K562 (cell line): ENCODE measurements at regions of chr11 and their contacts with region 1.

Region 1: DNA sequence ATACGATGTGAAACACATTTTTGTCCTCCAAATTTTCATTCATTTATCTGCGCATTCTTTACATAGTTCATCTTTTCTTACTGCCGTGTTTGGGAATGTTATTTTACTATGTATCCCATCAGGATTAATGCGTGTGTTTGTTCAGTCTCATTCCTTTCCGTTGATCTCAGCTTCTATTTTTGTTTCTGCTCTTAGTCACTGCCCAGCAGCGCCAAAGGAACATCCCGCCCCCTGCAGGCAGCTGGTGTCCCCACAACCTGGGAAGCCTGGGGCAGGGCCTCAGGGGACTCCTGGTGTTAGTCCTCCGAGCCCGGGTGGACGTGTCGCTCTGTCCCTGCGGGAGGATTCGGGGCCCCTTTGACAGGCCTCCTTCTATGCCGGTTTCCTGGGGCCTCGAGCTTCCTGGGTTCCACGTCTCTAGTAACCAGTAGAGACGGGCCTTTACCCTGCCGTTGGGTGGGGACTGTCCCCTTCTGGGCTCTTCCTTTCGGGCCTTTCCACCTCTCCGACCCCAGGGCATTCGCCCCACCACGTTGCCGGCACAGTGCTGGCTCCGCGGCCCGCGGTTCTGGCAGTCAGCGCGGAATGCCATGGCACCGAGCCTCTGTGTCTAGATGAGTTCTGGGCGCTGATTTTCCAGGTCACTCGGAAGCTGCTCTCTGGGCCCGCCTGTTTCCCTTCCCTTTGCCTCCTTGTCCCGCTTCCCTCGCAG is 39.8 kb downstream of the WEE1 start:
- DNase-seq: peak; percentile 88 to 97 (median 92)
- ATAC-seq: peak; percentile 90
- H3K4me3 ChIP-seq: peak overlapping the region; percentile 46
- H3K27ac ChIP-seq: peak overlapping the region; percentile 95
- H3K4me1 ChIP-seq: peaks cover 19 to 21% of the 10 kb centered on the region in 2 experiments; a peak in 4 of 5 replicates
- H3K27me3 ChIP-seq: no peaks in the 10 kb centered on the region
- CTCF ChIP-seq: peak; percentile 94 to 98 (median 97)
- EP300 ChIP-seq: peak; percentile 64
- POLR2A ChIP-seq: peak; percentile 65
- RAD21 ChIP-seq: peak; percentile 93

Region 2: DNA sequence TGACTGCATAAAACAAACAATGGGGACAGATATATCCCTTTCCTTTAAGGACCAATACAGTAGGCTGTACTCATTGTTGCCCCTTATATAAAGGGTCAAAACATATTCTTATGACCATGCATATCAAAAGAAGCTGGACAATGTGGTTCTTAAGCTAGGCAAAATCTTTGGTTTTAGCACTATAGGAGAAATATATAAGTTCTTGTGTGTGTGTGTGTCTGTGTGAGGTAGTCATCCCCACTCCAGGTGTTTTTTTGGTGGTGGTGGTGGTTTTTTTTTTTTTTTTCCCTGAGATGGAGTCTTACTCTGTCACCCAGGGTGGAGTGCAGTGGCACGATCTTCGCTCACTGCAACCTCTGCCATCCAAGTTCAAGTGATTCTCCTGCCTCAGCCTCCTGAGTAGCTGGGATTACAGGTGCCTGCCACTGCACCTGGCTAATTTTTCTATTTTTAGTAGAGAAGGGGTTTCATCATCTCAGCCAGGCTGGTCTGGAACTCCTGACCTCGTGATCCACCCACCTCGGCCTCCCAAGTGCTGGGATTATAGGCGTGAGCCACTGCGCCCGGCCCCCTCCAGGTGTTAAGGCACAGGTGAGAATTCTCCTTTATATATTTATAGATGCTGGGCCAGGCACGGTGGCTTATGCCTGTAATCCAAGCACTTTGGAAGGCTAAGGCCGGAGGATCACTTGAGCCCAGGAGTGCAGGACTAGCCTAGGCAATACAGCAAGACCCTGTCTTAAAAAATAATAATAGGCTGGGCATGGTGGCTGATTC is 164.5 kb before region 1 on chr11:
- CTCF ChIA-PET with region 1: no interaction called
- POLR2A ChIA-PET with region 1: no interaction called
- in situ Hi-C with region 1: no loop called
- intact Hi-C with region 1: loop called (anchors 5 kb)
- DNase-seq: no peak
- ATAC-seq: peak; percentile 32
- H3K4me3 ChIP-seq: no peak overlapping the region
- H3K27ac ChIP-seq: no peak overlapping the region
- H3K4me1 ChIP-seq: no peaks in the 10 kb centered on the region
- H3K27me3 ChIP-seq: no peaks in the 10 kb centered on the region
- CTCF ChIP-seq: no peak
- EP300 ChIP-seq: no peak
- POLR2A ChIP-seq: peak; percentile 64
- RAD21 ChIP-seq: no peak

Region 3: GRCh38 chr11:9534791-9535781 is 78.2 kb before region 1 on chr11:
- CTCF ChIA-PET with region 1: interaction called, 15 read pairs
- POLR2A ChIA-PET with region 1: interaction called, 7 read pairs
- in situ Hi-C with region 1: no loop called
- intact Hi-C with region 1: loop called (anchors 1 kb)
- DNase-seq: peak; percentile 75 to 88 (median 78)
- ATAC-seq: peak; percentile 86
- H3K4me3 ChIP-seq: no peak overlapping the region
- H3K27ac ChIP-seq: no peak overlapping the region
- H3K4me1 ChIP-seq: peaks cover 11 to 15% of the 10 kb centered on the region in 2 experiments; a peak in 4 of 5 replicates
- H3K27me3 ChIP-seq: no peaks in the 10 kb centered on the region
- CTCF ChIP-seq: peak; percentile 88 to 96 (median 94)
- EP300 ChIP-seq: peak; percentile 32; the same call in 1 of the 2 replicates
- POLR2A ChIP-seq: no peak
- RAD21 ChIP-seq: peak; percentile 82 to 92

Region 4: GRCh38 chr11:9550191-9550628 is 63.1 kb before region 1 on chr11:
- CTCF ChIA-PET with region 1: no interaction called
- POLR2A ChIA-PET with region 1: no interaction called
- in situ Hi-C with region 1: no loop called
- intact Hi-C with region 1: no loop called
- DNase-seq: peak in 1 of 4 experiments; percentile 71
- ATAC-seq: peak; percentile 9; the same call in 2 of the 3 replicates
- H3K4me3 ChIP-seq: no peak overlapping the region
- H3K27ac ChIP-seq: peak overlapping the region; percentile 85
- H3K4me1 ChIP-seq: peaks cover 26 to 30% of the 10 kb centered on the region in 2 experiments; a peak in 4 of 5 replicates
- H3K27me3 ChIP-seq: no peaks in the 10 kb centered on the region; a peak in 1 of 5 replicates
- CTCF ChIP-seq: no peak
- EP300 ChIP-seq: peak; percentile 70; the same call in 1 of the 2 replicates
- POLR2A ChIP-seq: no peak
- RAD21 ChIP-seq: no peak

Region 5: GRCh38 chr11:9748361-9748970 is 135.2 kb after region 1 on chr11:
- CTCF ChIA-PET with region 1: interaction called, 16 read pairs
- POLR2A ChIA-PET with region 1: no interaction called
- in situ Hi-C with region 1: loop called (anchors 5 kb)
- intact Hi-C with region 1: loop called (anchors 1 kb)
- DNase-seq: peak; percentile 36 to 79 (median 56)
- ATAC-seq: peak; percentile 96
- H3K4me3 ChIP-seq: no peak overlapping the region
- H3K27ac ChIP-seq: no peak overlapping the region
- H3K4me1 ChIP-seq: peaks cover 0 to 4% of the 10 kb centered on the region in 2 experiments; a peak in 3 of 5 replicates
- H3K27me3 ChIP-seq: no peaks in the 10 kb centered on the region
- CTCF ChIP-seq: peak; percentile 89 to 93 (median 92)
- EP300 ChIP-seq: no peak
- POLR2A ChIP-seq: no peak
- RAD21 ChIP-seq: peak; percentile 95 to 96

Region 6: DNA sequence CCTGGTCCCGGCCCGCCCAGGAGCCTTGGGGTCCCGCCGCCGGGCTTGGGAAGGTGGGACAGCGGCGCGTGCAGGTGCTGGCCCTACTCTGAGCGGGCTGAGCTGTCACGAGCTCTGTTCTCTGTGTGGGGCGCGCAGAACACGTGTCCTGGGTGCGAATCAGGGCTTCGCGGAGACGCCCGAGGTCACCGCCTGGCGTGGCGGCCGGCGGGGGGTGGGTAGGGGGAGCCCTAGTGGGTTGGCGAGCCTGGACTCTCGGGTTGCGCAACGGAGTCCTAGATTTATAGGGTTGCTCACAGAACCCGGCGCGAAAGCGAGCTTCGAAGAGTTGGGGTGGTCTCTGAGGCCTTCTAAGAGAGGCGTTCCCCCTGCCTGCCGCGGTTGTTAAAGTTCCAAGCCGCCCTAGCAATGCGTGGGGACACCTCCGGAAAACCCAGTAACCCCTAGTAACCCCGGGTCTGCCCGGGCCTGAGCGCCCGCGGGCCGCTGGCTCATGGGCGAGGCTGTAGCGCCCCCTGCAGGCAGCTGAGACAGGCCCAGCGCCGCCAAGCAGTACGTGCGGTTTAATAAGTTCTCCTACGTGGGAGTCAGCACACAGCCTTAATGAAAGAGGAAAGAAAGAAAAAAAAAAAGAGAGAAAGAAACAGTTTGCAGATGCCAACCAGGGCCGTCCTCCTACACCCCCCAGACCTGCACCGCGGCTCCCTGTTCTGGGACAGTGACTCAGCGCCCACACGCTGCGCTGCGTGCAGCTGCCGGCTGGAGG is 694.4 kb after region 1 on chr11:
- CTCF ChIA-PET with region 1: no interaction called
- POLR2A ChIA-PET with region 1: no interaction called
- in situ Hi-C with region 1: no loop called
- intact Hi-C with region 1: loop called (anchors 5 kb)
- DNase-seq: peak; percentile 81 to 87 (median 84)
- ATAC-seq: peak; percentile 94
- H3K4me3 ChIP-seq: peak overlapping the region; percentile 32
- H3K27ac ChIP-seq: no peak overlapping the region; the same call in 2 of the 3 replicates
- H3K4me1 ChIP-seq: peaks cover 24 to 50% of the 10 kb centered on the region in 2 experiments
- H3K27me3 ChIP-seq: peaks cover 15 to 19% of the 10 kb centered on the region in 2 experiments
- CTCF ChIP-seq: peak; percentile 87 to 97 (median 88)
- EP300 ChIP-seq: no peak
- POLR2A ChIP-seq: no peak
- RAD21 ChIP-seq: peak; percentile 85 to 89